Posterior cingulate gyrus (tissue), 11 donors: ENCODE measurements at regions of chr17 and their contacts with region 1.

Region 1: DNA sequence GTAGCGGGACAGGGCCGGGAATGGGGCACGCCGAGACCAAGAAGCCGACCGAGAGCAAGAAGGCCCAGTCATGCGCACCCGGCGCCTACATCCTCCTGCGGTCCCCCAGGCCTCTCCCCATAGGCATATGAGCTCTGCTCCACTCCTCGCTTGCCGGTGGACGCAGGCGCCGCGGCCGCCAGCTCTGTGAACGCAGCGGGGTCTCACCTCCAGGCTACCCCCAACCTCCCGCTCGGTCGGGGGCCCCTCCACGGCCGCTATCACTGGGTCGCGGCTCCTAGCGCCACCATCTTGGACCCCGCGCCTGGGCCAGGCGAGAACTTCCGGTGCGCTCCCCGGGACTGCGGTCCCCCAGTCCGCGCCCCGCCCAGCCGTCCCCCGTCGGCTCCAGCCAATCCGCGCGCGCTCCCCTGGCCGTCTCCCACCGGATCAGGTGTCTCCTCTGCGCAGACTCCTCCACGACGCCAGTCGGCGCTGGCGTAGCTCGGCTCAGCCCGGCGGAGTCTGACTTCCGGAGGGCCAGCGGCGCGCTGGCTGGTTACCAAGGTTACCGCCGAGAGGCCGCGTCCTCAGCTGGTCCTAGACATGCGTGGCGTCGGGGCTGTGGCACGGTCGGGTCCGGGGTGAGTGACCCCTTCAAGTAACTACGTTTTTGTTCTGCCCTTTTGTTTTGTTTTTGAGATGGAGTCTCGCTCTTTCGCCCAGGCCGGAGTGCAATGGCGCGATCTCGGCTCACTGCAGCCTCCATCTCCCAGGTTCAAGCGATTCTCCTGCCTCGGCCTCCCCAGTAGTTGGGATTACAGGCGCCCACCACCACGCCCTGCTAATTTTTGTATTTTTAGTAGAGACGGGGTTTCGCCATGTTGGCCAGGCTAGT is at the start of gene ZNF594:
- DNase-seq: peak; percentile 93 to 99 (median 96)

Region 2: GRCh38 chr17:5111402-5112204 is 80.2 kb before region 1 on chr17 and contains the start of gene ZNF232:
- intact Hi-C with region 1: loop called (anchors 5 kb)
- DNase-seq: peak; percentile 88 to 99 (median 92)

Region 3: GRCh38 chr17:5164436-5164835 is 27.3 kb before region 1 on chr17:
- intact Hi-C with region 1: no loop called
- DNase-seq: no peak

Region 4: DNA sequence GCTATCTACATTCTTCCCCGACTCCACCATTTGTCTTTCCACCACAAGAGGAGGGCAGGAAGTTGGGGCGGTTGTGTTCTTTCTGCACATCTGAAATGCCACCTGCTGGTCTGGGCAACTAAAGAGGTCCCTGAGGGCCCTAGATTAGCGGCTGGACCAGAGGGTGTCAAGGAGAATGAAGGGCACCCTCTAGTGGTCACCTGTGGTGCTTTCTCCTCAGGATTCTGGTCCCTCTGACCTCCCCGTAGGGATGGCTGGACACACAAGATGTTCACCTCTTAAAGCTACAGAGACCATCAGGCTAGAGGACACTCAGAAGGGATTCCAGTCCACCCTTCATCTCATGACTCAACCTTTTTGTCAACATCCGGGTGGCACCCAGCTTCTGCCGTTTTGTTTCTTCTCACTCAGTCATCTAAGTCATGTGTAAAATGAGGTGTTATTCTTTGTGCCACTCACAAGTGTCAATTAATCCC is 45.8 kb after region 1 on chr17:
- intact Hi-C with region 1: loop called (anchors 5 kb)
- DNase-seq: peak in 4 of 10 donors; percentile 16 to 76 (median 26)